ENCODE measurements at regions of chr11 and their contacts with region 1.

Region 1: DNA sequence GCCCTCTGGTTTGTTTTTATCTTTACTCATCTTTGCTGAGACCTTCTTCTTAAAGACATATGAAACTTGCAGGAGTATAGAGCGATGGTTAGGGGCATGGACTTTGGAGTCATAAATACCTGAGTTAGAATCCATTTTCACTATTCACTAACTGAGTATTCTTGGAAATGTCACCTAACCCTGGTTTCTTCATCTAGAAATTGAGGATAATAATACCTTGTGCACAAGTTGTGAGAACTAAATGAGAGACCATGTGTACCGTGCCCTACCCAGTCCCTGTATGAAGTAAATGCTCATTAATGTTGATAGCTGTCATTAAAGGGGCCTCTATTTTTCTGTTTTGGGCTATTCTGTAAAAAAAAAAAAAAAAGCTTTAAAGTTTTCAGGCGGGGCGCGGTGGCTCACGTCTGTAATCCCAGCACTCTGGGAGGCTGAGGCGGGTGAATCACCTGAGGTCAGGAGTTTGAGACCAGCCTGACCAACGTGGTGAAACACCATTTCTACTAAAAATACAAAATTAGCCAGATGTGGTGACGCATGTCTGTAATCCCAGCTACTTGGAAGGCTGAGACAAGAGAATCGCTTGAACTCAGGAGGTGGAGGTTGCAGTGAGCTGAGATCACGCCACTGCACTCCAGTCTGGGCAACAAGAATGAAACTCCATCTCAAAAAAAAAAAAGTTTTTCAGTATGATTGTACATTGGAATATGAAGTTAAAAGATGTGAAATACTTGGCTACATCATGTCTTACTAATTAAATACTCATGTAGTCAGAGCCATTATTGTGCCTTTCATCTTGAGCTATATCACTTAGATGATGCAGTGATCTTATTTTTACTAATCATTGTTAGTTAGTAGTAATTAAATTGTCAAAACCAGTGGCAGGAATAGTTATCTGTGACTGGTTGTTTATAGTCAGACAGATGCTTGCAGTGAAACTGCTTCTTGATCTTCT is 95.0 kb downstream of the AMOTL1 start:
- DNase-seq: no peak
- ATAC-seq: no peak
- H3K4me3 ChIP-seq: no peak overlapping the region
- H3K27ac ChIP-seq: no peak overlapping the region
- H3K4me1 ChIP-seq: no peaks in the 10 kb centered on the region
- H3K27me3 ChIP-seq: no peaks in the 10 kb centered on the region
- CTCF ChIP-seq: no peak
- POLR2A ChIP-seq: no peak

Region 2: DNA sequence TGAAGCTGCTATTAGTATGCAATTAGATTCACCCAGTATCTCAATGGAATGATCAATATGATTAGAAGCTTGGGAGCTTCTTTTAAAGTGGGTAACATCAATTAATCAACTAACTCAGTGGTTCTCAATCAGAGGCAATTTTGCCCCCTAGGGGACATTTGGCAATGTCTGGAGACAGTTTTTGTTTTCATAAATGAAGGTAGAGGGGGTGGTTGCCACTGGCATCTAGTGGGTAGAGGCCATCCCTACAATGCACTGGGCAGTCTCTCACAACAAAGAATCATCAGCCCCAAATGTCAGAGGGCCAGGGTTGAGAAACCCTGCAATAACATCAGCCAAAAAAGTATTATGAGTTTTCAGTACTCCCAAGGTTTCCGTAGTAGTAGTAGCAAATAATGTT is 101.0 kb before region 1 on chr11:
- intact Hi-C with region 1: no loop called
- DNase-seq: no peak
- ATAC-seq: peak in 2 of 4 donors; percentile 22 to 35
- H3K4me3 ChIP-seq: no peak overlapping the region
- H3K27ac ChIP-seq: no peak overlapping the region
- H3K4me1 ChIP-seq: peaks cover 0 to 13% (median 0%) of the 10 kb centered on the region in 4 donors
- H3K27me3 ChIP-seq: no peaks in the 10 kb centered on the region
- CTCF ChIP-seq: peak; percentile 9 to 22 (median 20)
- POLR2A ChIP-seq: no peak

Region 3: DNA sequence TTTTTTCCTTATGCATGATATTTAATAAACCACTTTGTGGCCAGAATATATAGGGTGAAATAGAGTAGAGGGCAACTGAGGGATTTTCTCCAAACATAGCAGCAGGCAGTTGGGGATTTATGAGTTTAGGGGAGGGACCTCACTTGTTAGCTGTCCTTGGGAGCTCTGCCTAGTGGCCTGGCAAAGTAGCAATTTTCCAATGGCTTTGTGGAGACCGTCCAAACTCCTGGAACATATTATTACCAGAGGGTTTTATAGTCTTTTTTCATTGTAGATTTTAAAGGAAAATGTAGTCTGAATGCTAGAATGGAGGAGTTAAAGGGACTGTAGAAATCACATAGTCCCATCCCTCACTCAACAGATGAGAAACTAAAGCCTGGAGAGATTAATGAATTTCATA is 62.8 kb before region 1 on chr11:
- intact Hi-C with region 1: loop called in 1 of 2 experiments (anchors 10 kb)
- DNase-seq: peak in 1 of 3 donors; percentile 74
- ATAC-seq: peak; percentile 16 to 56 (median 49)
- H3K4me3 ChIP-seq: no peak overlapping the region
- H3K27ac ChIP-seq: peak overlapping the region in 1 of 3 donors; percentile 60
- H3K4me1 ChIP-seq: peaks cover 0 to 72% (median 7%) of the 10 kb centered on the region in 4 donors
- H3K27me3 ChIP-seq: no peaks in the 10 kb centered on the region
- CTCF ChIP-seq: no peak
- POLR2A ChIP-seq: no peak

Region 4: DNA sequence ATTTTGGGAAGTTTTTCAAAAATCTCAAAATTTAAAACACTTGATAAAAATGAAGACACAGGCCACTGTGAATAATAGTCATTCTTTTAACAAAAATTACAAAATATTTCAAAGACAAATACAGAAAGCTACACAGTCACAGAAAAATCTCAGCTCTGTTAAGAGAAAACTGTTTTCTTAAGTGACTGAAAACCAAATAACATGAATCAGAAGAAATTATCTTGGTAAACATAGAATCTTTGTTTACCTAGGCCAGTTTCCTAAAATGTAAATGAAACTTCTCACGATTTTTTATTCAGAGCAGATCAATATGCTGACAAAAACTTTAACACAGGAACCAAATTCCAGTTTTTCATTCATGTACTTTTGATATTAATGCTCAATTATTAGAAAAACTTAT is 141.1 kb after region 1 on chr11:
- intact Hi-C with region 1: no loop called
- DNase-seq: no peak
- ATAC-seq: no peak
- H3K4me3 ChIP-seq: no peak overlapping the region
- H3K27ac ChIP-seq: no peak overlapping the region
- H3K4me1 ChIP-seq: no peaks in the 10 kb centered on the region
- H3K27me3 ChIP-seq: no peaks in the 10 kb centered on the region
- CTCF ChIP-seq: no peak
- POLR2A ChIP-seq: no peak

Measured in right lobe of liver (tissue), 6 donors.